Head of caudate nucleus (tissue), 42 donors: ENCODE measurements at regions of chr22 and their contacts with region 1.

Region 1: GRCh38 chr22:43812149-43812842 is at the start of gene EFCAB6:
- DNase-seq: peak; percentile 91 to 98 (median 95)

Region 2: DNA sequence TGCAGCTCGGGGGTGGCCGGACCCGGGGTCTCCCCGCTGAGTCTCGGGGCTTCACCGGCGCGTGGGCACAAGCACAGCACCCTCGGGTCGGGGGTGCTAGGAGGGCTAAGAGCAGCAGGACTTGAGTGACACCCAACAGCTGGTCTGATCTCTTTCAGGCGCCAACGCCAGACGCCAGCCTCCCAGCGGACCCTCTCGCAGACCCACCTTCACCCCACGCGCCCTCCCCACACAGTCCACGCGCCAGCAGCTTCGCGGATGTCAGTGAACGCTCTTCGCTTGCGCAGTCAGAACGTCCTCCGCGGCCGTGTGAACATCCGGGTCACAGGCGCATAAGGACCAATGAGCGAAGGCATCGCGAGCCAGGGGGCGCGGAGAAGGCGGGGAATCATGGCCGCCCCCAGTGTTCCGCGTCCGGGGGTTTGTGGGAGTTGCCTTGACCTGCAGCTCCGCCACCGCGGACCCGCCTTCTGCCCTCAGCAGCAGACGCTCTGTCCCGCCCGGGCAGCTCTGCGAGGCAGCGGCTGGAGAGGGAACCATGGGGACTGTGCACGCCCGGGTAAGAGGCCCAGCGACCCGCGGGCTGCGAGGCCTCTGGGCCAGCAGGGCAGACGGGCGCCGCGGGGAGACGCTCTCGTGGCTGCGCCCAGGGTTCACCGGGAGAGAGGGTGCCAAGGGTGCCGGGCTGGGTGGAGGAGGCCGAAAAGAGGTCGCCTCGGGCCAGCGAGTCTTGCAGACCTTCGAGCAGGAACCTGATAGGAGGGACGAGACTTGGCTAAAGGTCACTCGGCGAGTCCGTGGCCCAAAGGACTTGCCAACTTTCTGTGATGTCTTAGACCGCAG is 143.0 kb after region 1 on chr22 and contains the start of gene SAMM50:
- intact Hi-C with region 1: loop called (anchors 5 kb)
- DNase-seq: peak; percentile 91 to 98 (median 96)